Right ventricle myocardium superior (tissue), 1 donor: ENCODE measurements at regions of chr10 and their contacts with region 1.

Region 1: DNA sequence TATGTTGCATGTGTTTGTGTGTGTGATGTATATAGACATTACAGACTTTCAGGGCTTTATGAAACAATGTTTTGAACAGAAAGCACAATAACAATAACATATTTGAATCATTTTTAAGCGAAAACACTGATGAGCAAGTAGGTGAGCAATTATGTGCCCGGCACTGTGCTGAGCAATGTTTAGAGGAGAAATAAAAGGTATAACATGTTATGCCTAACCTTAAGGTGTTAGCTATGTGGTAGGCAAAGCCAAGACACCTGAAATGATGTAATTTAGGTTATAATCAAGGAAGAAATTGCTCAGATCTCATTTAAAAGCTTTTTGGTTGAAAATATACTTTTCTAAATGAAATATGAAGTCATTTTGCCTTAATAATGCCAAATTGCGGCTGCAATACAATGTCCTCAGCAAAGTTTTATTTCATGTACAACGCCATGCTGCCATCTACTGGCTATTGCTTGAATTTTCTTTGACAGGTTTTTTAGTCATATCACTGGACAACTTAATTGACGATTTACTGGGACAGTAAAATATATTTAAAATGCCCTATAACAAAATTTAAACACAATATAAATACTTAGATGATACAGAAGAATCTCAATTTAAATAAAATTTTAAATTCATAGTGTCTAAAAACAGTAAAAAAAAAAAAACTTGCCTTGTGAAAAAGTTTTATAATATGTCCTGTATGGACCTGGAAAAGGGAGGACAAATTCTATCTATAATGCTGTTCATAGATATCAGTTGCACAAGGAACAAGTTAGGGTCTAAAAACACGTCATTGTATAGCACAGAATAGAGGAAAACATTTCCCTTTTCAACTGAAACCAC is 131.1 kb upstream of the CDK1 start:
- DNase-seq: no peak
- ATAC-seq: peak; percentile 72

Region 2: GRCh38 chr10:60444494-60445064 is 202.6 kb before region 1 on chr10:
- intact Hi-C with region 1: loop called (anchors 5 kb)
- DNase-seq: no peak
- ATAC-seq: no peak

Region 3: GRCh38 chr10:60955957-60956425 is 308.8 kb after region 1 on chr10:
- intact Hi-C with region 1: no loop called
- DNase-seq: no peak
- ATAC-seq: no peak

Region 4: GRCh38 chr10:61643316-61643751 is 996.2 kb after region 1 on chr10:
- intact Hi-C with region 1: no loop called
- DNase-seq: no peak
- ATAC-seq: no peak